Breast epithelium (tissue), 4 donors: ENCODE measurements at regions of chr2 and their contacts with region 1.

Region 1: DNA sequence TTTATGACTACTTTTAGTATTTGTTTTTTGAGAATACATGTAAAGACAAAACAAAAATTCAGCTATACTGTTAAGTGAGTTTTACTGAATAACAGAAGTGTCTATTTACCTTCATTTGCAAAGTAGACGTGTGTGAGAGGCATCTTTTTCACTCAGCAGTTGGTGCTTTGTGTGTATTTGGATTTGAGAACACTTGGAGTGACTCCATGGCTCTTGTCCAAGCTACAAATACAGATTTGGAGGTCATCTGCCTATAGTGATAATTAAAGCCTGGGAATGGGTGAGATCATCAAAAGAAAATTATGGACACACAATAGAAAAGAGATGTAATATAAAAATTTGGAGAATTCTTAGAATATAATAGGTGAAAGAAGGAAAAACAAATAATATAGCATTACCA is 6.2 kb downstream of the NAB1 start:
- DNase-seq: no peak
- H3K4me3 ChIP-seq: no peak overlapping the region
- H3K27ac ChIP-seq: peak overlapping the region in 1 of 2 donors; percentile 35
- H3K4me1 ChIP-seq: peaks cover 0 to 21% of the 10 kb centered on the region in 2 donors
- H3K27me3 ChIP-seq: no peaks in the 10 kb centered on the region
- CTCF ChIP-seq: no peak
- POLR2A ChIP-seq: no peak

Region 2: DNA sequence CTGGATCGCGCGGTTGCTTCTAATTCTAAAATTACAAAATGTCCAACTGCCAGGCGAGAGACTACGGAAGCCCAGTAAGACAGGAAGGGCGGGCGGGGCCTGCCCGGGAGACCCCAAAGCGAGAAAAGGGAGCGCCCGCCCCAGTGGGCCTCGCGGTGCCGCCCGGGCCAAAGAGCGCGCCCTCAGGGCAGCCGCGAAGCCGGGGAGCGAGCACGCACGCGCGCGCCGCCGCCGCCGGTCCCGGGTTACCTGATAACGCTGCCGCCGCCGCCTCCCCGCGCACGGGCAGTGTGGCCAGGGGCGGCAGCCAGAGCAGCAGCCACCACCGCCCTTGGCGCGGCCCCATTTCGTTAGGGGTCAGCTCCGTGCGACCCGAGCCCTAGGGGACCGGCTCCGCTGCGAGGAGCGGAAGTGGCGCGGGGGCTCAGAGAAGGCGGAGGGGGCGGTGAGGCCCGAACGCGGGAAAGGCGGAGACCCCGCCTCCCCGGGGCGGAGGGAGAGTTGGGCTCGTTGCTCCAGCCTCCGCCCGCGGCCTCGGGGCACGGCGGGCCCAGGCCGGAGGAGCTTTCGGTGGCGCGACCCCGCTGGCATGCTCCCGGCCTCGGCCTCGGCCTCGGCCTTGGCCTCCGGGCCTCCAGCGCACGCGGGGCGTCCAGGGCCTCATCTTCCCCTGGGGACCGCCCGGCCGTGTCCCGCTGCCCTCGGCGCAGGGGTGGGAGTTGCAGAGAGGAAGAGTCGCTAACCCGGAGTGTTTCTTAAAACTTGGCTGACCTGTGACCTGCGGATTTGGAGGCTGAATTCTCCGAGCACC is 120.6 kb before region 1 on chr2 and contains the start of gene NEMP2:
- intact Hi-C with region 1: loop called (anchors 5 kb)
- DNase-seq: peak; percentile 49 to 57
- H3K4me3 ChIP-seq: peak within 1 kb of the TSS; percentile 61 to 81 (median 66)
- H3K27ac ChIP-seq: peak within 1 kb of the TSS; percentile 93 to 98
- H3K4me1 ChIP-seq: no peaks in the 10 kb centered on the region
- H3K27me3 ChIP-seq: no peaks in the 10 kb centered on the region
- CTCF ChIP-seq: no peak
- POLR2A ChIP-seq: peak; percentile 39
- total RNA-seq, gene NEMP2: 4.5 to 6.6 (median 5.2) TPM

Region 3: DNA sequence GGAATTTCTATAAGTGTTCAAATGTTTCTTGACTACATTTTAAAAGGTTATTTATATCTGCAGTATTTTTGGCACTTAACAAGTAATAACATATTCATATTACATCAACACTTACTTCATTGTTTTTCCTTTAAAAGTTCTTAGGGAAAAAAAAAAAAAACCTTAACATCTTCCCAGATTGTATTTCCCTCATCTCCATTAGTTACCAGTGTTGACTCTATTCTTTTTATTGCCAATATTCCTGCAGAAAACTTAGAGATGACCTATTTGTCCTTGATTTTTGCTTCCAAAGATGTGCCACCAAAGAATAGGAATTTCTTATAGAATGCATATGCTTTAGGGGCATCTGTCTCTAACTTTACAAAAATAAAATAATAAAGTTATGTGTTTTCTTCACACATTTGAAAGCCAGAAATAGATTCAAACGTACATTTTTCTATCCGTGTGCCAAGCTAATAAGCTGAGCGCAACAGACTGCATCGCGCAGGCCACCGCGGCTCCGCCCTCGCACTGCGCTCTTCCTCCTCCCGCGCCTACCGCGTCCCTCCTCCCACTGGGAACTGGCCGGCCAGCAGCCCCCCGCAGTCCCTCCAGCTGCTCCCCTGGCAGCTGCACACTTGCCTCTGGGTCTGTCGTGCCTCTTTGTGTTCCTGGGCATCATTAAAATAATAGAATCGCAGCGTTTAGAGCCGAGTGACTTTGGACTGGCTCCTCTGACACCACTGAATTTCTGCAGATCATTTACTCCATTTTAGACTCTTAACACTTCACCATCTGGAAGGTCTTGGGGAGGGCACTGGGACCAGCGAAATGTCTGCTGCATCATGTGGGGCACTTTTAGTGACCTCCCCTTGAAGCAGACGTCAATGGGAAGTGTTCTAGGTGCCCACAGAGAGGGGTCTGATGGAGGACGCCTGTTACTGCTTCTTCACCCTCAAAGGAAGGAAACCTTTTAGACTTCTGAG is 27.4 kb before region 1 on chr2:
- intact Hi-C with region 1: no loop called
- DNase-seq: no peak
- H3K4me3 ChIP-seq: peak overlapping the region; percentile 41 to 68 (median 51)
- H3K27ac ChIP-seq: peak overlapping the region; percentile 66 to 84
- H3K4me1 ChIP-seq: no peaks in the 10 kb centered on the region
- H3K27me3 ChIP-seq: no peaks in the 10 kb centered on the region
- CTCF ChIP-seq: no peak
- POLR2A ChIP-seq: no peak

Region 4: GRCh38 chr2:191165176-191165643 is 510.1 kb after region 1 on chr2:
- intact Hi-C with region 1: no loop called
- DNase-seq: no peak
- H3K4me3 ChIP-seq: no peak overlapping the region
- H3K27ac ChIP-seq: no peak overlapping the region
- H3K4me1 ChIP-seq: peaks cover 0 to 4% of the 10 kb centered on the region in 2 donors
- H3K27me3 ChIP-seq: no peaks in the 10 kb centered on the region
- CTCF ChIP-seq: peak; percentile 6 to 55 (median 32)
- POLR2A ChIP-seq: no peak